Activated T-helper 1 cell treated with anti-CD3 and anti-CD28 coated beads, Interleukin-12 subunit alpha, Interleukin-12 subunit beta, Interleukin-2, Interleukin-4 antibody, amounts not matched to agents 30 ng/mL and 10 ng/mL and 1 ng/mL, durations not matched to agents 14 hours and 24 hours and 36 hours (primary cell): ENCODE measurements at regions of chr2 and their contacts with region 1.

Region 1: GRCh38 chr2:116696223-116696622 is 1118.3 kb upstream of the DDX18 start:
- DNase-seq: no peak
- H3K4me3 Mint-ChIP-seq: no peak overlapping the region
- H3K27ac Mint-ChIP-seq: no peak overlapping the region
- H3K4me1 Mint-ChIP-seq: no peaks in the 10 kb centered on the region
- H3K27me3 Mint-ChIP-seq: no peaks in the 10 kb centered on the region

Region 2: GRCh38 chr2:117785740-117786139 is 1089.5 kb after region 1 on chr2:
- intact Hi-C with region 1: loop called (anchors 10 kb)
- DNase-seq: no peak
- H3K4me3 Mint-ChIP-seq: no peak overlapping the region
- H3K27ac Mint-ChIP-seq: no peak overlapping the region
- H3K4me1 Mint-ChIP-seq: no peaks in the 10 kb centered on the region
- H3K27me3 Mint-ChIP-seq: peaks cover 2% of the 10 kb centered on the region